Left cardiac atrium (tissue), 4 donors: ENCODE measurements at regions of chr2 and their contacts with region 1.

Region 1: DNA sequence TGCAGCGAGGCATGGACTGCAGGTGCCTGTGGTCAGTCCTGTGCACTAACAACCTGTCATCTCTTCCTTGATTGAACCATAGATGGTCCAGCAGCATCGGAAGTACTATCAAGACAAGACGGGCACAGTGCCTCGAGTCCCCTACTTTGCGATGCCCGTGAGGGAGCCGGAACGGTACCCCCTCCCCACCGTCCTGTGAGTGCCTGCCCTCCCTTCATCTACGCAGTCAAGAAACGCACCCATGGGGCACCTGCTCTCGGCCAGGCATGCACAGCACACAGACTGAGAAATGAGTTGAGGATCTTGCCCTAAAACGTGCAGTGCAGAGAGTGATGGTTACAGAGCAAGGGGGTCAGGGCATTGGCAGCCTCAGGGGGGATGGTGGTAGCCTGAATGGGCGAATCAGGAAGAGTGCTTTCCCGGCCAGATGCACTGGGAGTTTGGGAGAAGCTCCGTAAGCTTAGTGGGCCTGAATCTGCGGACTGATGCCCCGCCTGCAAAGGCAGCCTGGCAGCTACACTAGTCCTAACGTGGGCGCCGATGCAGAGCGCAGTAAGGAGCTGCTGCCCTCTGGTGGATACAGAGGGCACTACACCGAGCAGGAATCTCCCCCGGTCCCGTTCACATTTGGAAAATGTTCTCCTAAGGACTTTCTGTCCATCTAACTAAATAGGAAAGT is 63.6 kb downstream of the CIB4 start:
- DNase-seq: peak; percentile 67
- ATAC-seq: peak; percentile 66 to 83

Region 2: DNA sequence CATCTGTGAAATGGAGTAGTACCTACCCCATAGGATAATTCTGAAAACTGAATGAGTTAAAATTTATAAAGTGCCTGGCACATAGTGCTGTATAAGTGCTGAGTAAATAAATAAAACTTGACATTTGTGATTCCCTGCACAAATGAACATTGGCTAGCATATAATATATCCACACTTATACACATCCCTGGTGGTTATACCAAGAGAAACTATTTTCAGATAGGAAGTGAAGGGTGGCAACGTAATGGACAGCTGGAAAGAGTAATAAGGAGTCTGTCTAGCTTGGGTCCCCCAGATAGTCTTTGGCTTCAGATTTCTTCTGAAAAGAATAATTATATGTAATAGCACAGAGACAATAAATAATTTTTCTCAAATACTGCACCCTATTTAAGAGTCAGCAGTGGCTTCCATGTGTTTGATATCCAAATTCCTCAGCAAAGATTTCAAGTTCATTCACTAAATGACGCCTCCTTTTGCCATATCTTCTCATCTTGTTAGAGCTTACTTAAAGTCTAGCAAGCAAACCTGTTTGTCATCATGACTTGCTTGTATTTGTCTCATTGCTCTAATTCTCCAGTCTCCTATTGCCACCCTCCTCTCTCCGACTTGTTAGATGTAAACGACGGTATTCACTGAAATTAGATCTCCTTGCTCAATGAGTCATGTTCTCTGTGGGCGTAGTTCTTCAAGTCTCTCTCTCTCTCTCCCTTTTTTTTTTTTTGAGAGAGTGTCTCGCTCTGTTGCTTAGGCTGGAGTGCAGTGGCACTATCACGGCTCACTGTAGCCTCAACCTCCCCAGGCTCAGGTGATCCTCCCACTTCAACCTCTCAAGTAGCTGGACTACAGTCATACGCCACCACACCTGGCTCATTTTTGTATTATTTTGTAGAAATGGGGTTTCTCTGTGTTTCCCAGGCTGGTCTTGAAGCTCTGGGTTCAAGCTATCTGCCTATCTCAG is 222.3 kb before region 1 on chr2:
- intact Hi-C with region 1: no loop called
- DNase-seq: no peak
- ATAC-seq: peak in 1 of 2 donors; percentile 75

Region 3: GRCh38 chr2:26503231-26503880 is 74.2 kb before region 1 on chr2:
- intact Hi-C with region 1: loop called in 1 of 2 experiments (anchors 5 kb)
- DNase-seq: peak; percentile 80
- ATAC-seq: peak; percentile 94 to 97

Region 4: DNA sequence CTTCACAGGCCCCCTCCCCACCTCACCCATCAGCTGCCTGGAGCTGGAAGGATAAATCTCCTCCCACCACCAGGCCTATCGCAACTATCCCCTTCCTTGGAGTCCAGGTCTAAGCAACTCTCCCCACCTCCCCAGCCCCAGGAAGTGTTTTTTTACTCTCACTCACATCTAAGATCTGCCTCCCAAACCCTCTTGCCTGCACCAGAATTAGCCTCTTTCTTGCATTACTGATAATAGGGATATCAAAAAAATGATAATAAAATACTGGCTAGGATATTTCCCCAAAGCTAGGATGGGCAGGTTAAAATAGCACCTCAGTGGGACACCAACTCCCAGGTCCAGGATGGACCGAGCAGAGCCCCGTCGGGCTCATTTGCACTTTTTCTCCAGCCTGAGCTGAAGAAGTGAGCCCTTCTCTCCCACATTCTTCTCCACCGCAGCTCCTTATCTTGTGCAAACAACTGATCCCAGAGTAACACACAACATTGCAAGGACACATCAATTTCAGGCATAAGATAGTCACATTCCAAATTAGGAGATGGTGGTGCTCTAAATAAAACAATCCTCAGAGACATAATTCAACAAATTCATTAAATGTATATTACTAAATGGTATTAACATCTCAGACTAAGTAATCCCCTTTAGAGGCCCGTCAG is 81.2 kb after region 1 on chr2:
- intact Hi-C with region 1: no loop called
- DNase-seq: no peak
- ATAC-seq: no peak